B cell (primary cell): ENCODE measurements at regions of chr16 and their contacts with region 1.

Region 1: DNA sequence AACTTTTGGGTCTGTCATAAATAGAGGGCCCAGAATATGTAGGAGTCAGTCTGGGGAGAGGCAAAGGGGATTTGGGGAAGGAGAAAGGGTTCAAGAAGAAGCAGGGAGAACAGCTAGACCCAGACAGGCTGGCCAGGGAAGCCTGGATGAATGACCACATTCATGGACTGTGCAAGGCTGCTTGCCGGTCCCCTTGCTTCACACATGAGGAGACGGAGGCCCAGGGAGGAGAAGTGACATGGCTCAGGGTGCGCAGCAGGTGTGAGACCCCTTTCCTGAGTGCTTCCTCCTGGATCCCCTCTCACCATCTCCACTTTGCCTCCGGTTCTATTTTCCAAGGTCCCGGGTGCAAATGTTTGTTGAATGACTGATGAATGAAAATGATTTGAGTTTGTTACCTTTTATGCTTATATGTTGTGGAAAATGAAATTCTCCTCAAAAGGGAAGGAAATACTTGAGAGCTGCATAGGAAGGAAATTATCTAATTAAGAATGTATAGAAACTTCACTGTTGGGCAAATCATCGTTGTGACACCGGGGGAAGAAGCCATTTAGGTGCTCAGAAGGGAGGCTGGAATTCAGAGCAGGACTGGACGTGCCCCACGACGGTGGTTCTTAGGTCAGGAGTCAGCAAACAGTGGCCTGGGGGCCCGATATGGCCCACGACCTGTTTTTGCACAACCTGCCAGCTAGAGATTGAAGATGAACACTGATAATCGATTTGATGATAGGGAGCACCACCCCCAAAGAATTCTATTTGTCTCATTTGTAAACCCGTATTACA is 552 bp downstream of the ITGAM start:
- DNase-seq: peak; percentile 27
- ATAC-seq: peak; percentile 28
- H3K4me3 ChIP-seq: peak overlapping the region; percentile 36 to 61 (median 60)
- H3K4me3 Mint-ChIP-seq: peak overlapping the region; percentile 89
- H3K27ac ChIP-seq: peak overlapping the region in 1 of 2 donors; percentile 30
- H3K27ac Mint-ChIP-seq: peak overlapping the region; percentile 90
- H3K4me1 ChIP-seq: peaks cover 50 to 69% of the 10 kb centered on the region in 2 donors
- H3K4me1 Mint-ChIP-seq: peaks cover 51% of the 10 kb centered on the region
- H3K27me3 ChIP-seq: no peaks in the 10 kb centered on the region
- H3K27me3 Mint-ChIP-seq: no peaks in the 10 kb centered on the region
- CTCF ChIP-seq: no peak

Region 2: GRCh38 chr16:31229501-31229900 is 30.8 kb before region 1 on chr16:
- CTCF ChIA-PET with region 1: no interaction called
- POLR2A ChIA-PET with region 1: no interaction called
- intact Hi-C with region 1: loop called (anchors 5 kb)
- DNase-seq: no peak
- ATAC-seq: no peak
- H3K4me3 ChIP-seq: no peak overlapping the region
- H3K4me3 Mint-ChIP-seq: no peak overlapping the region
- H3K27ac ChIP-seq: no peak overlapping the region
- H3K27ac Mint-ChIP-seq: no peak overlapping the region
- H3K4me1 ChIP-seq: no peaks in the 10 kb centered on the region
- H3K4me1 Mint-ChIP-seq: no peaks in the 10 kb centered on the region
- H3K27me3 ChIP-seq: peaks cover 0 to 4% (median 0%) of the 10 kb centered on the region in 4 experiments
- H3K27me3 Mint-ChIP-seq: peaks cover 7% of the 10 kb centered on the region
- CTCF ChIP-seq: no peak

Region 3: GRCh38 chr16:31243734-31244670 is 16.3 kb before region 1 on chr16:
- CTCF ChIA-PET with region 1: interaction called, 5 read pairs
- POLR2A ChIA-PET with region 1: interaction called, 3 read pairs
- intact Hi-C with region 1: loop called (anchors 1 kb)
- DNase-seq: peak; percentile 82
- ATAC-seq: peak; percentile 90
- H3K4me3 ChIP-seq: no peak overlapping the region
- H3K4me3 Mint-ChIP-seq: peak overlapping the region; percentile 52
- H3K27ac ChIP-seq: no peak overlapping the region
- H3K27ac Mint-ChIP-seq: peak overlapping the region; percentile 57
- H3K4me1 ChIP-seq: peaks cover 11 to 19% of the 10 kb centered on the region in 2 donors
- H3K4me1 Mint-ChIP-seq: peaks cover 13% of the 10 kb centered on the region
- H3K27me3 ChIP-seq: peaks cover 0 to 12% (median 4%) of the 10 kb centered on the region in 4 experiments
- H3K27me3 Mint-ChIP-seq: no peaks in the 10 kb centered on the region
- CTCF ChIP-seq: no peak